ENCODE measurements at regions of chr21 and their contacts with region 1.

Region 1: GRCh38 chr21:45228171-45228641 is 59.5 kb downstream of the POFUT2 start:
- DNase-seq: no peak
- ATAC-seq: peak in 2 of 8 donors; percentile 33 to 65
- H3K4me3 ChIP-seq: no peak overlapping the region
- H3K27ac ChIP-seq: no peak overlapping the region
- H3K4me1 ChIP-seq: peaks cover 0 to 15% (median 0%) of the 10 kb centered on the region in 9 donors
- H3K27me3 ChIP-seq: peaks cover 0 to 21% (median 9%) of the 10 kb centered on the region in 7 donors
- CTCF ChIP-seq: no peak

Region 2: DNA sequence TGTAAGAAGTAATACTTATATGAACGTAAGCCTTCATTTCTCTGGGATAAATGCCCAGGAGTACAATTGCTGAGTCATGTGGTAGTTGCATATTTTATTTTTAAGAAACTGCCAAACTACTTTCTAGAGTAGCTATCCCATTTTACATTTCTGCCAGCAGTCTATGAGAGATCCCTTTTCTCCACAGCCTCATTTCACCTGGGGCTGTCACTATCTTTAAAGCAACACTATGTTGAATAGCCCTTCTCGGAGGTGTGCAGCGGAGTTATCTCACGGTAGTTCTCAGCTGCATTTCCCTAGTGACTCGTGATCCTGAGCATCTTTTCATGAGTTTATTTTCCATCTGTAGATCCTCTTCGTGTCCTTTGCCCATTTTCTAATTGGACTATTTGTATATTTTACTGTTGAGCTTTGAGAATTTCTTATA is 60.4 kb before region 1 on chr21:
- intact Hi-C with region 1: loop called in 1 of 10 experiments (anchors 10 kb)
- DNase-seq: no peak
- ATAC-seq: no peak
- H3K4me3 ChIP-seq: no peak overlapping the region
- H3K27ac ChIP-seq: no peak overlapping the region
- H3K4me1 ChIP-seq: peaks cover 5 to 34% (median 16%) of the 10 kb centered on the region in 9 donors
- H3K27me3 ChIP-seq: no peaks in the 10 kb centered on the region
- CTCF ChIP-seq: no peak

Measured in heart right ventricle (tissue), 16 donors.